ENCODE measurements at regions of chr6 and their contacts with region 1.

Region 1: GRCh38 chr6:33771146-33772081 is 17.5 kb downstream of the LEMD2 start:
- DNase-seq: peak; percentile 27 to 81 (median 65)
- ATAC-seq: peak; percentile 82
- H3K4me3 ChIP-seq: no peak overlapping the region
- H3K4me3 Mint-ChIP-seq: no peak overlapping the region
- H3K27ac ChIP-seq: no peak overlapping the region
- H3K27ac Mint-ChIP-seq: peak overlapping the region; percentile 58
- H3K4me1 ChIP-seq: no peaks in the 10 kb centered on the region
- H3K4me1 Mint-ChIP-seq: peaks cover 9% of the 10 kb centered on the region
- H3K27me3 ChIP-seq: no peaks in the 10 kb centered on the region
- H3K27me3 Mint-ChIP-seq: peaks cover 9% of the 10 kb centered on the region
- CTCF ChIP-seq: peak; percentile 95

Region 2: DNA sequence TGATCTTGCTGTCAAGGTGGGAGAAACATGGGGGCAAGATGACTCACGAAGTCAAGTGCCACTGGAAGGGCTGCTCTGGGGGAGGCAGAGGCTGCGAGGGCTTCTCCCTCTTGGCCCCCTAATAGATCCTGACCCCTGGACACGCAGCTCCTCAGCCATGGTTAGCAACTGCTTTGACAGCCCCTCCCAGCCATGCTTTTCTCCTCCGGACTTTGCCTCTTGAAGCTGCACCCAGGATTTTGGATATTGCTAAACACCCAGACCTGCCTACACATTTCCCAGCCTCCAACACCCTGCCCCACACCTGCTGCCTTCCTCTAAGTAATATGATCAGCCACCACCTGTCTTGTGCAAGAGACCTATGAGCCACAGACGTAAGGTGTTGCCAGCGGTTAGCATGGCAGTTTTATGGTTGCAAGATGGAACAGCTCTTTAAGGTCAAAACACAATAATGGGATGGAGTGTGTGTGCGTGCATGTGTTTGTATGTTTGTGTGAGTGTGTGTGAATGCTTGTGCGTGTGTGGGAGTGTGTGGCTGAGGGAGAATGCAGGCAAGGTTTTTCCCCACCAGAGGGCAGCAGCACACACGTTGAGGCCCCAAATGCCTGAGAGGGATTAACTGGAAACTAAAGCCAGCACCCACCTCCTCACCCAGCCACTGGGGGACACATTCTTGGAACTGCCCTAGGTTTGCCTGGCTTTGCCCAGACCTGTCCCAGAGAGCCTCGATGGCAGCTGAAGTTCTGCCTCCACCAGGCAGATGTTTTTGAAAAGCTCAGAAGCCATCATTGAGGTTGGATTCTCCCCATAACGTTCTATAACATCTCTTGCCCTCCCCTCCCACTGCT is 27.2 kb before region 1 on chr6:
- CTCF ChIA-PET with region 1: interaction called, 67 read pairs
- POLR2A ChIA-PET with region 1: no interaction called
- intact Hi-C with region 1: no loop called
- DNase-seq: peak; percentile 47 to 83 (median 76)
- ATAC-seq: peak; percentile 95
- H3K4me3 ChIP-seq: no peak overlapping the region
- H3K4me3 Mint-ChIP-seq: no peak overlapping the region
- H3K27ac ChIP-seq: no peak overlapping the region
- H3K27ac Mint-ChIP-seq: no peak overlapping the region
- H3K4me1 ChIP-seq: no peaks in the 10 kb centered on the region
- H3K4me1 Mint-ChIP-seq: peaks cover 3% of the 10 kb centered on the region
- H3K27me3 ChIP-seq: no peaks in the 10 kb centered on the region
- H3K27me3 Mint-ChIP-seq: peaks cover 4% of the 10 kb centered on the region
- CTCF ChIP-seq: peak; percentile 67

Region 3: DNA sequence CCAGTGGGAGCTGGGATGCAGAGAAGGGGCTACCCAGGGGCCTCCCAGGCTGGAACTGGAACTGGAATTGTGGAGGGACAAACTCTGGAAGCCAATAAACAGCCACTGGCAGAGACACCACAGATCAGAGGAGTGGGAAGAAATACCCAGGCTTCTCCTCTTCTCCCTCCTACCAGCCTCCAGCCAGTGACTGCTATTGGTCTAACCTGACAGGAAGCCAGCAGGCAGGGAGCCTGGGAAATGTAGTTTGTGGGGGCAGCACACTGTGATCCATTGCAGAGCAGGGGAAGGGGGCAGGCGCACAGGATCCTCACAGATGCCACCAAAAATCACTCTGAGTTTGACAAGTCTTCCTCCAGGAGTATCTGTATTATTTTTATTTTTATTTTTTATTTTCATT is 44.4 kb after region 1 on chr6:
- CTCF ChIA-PET with region 1: interaction called, 11 read pairs
- POLR2A ChIA-PET with region 1: no interaction called
- intact Hi-C with region 1: no loop called
- DNase-seq: peak in 1 of 9 experiments; percentile 16
- ATAC-seq: no peak
- H3K4me3 ChIP-seq: no peak overlapping the region
- H3K4me3 Mint-ChIP-seq: no peak overlapping the region
- H3K27ac ChIP-seq: no peak overlapping the region
- H3K27ac Mint-ChIP-seq: no peak overlapping the region
- H3K4me1 ChIP-seq: peaks cover 2% of the 10 kb centered on the region
- H3K4me1 Mint-ChIP-seq: peaks cover 4% of the 10 kb centered on the region
- H3K27me3 ChIP-seq: peaks cover 12 to 16% of the 10 kb centered on the region in 2 experiments
- H3K27me3 Mint-ChIP-seq: peaks cover 30% of the 10 kb centered on the region
- CTCF ChIP-seq: no peak

Region 4: DNA sequence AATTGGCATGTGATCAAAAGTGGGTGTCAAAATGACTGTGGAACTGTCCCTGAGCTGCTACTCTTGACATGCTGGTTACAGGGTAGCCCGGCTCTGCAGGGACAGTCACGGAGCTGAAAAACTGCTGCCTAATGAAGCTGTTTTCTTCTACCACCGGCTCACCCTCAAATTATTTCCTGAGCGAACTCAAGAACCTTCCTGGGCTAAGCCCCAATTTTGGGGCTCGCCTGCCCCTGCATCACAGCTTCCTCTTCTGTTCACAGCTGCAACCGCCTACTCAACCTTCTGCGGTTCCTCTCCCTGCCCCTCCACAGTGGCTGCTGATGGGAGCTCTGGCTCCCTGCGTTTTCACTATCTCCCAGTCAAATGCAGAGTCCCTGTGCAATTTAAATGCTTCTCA is 143.2 kb after region 1 on chr6:
- CTCF ChIA-PET with region 1: interaction called, 11 read pairs
- POLR2A ChIA-PET with region 1: no interaction called
- intact Hi-C with region 1: no loop called
- DNase-seq: peak; percentile 29 to 82 (median 59)
- ATAC-seq: peak; percentile 87
- H3K4me3 ChIP-seq: peak overlapping the region in 1 of 2 experiments; percentile 4
- H3K4me3 Mint-ChIP-seq: peak overlapping the region; percentile 67
- H3K27ac ChIP-seq: no peak overlapping the region
- H3K27ac Mint-ChIP-seq: peak overlapping the region; percentile 68
- H3K4me1 ChIP-seq: peaks cover 38% of the 10 kb centered on the region
- H3K4me1 Mint-ChIP-seq: peaks cover 49% of the 10 kb centered on the region
- H3K27me3 ChIP-seq: no peaks in the 10 kb centered on the region
- H3K27me3 Mint-ChIP-seq: no peaks in the 10 kb centered on the region
- CTCF ChIP-seq: no peak

Region 5: DNA sequence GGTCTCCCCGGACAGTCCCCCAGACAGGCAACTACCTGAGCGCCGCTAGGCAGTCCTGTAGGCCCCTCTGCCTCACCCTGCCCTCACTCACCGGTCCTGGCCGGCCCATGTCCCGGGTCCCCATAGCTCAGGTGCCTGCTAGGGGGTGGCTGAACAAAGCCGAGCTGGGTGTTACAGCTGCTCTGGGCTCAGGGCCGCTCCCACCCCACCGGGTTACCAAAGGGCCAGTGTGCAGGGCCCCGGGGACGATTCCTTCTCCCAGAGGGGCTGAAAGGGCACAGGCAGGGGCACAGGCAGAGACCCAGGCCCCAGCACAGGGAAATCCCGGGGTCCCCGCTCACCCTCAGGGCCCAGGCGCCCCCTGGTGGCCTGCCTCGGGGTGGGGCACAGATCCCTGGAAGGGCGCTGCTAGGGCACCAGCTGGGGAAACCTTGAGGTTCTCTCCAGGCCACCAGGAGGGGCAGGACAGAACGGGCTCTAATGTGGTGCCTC is 256.1 kb after region 1 on chr6:
- CTCF ChIA-PET with region 1: interaction called, 251 read pairs
- POLR2A ChIA-PET with region 1: interaction called, 9 read pairs
- intact Hi-C with region 1: loop called in 1 of 2 experiments (anchors 1 kb)
- DNase-seq: peak; percentile 29 to 84 (median 64)
- ATAC-seq: peak; percentile 66
- H3K4me3 ChIP-seq: no peak overlapping the region
- H3K4me3 Mint-ChIP-seq: no peak overlapping the region
- H3K27ac ChIP-seq: no peak overlapping the region
- H3K27ac Mint-ChIP-seq: no peak overlapping the region
- H3K4me1 ChIP-seq: no peaks in the 10 kb centered on the region
- H3K4me1 Mint-ChIP-seq: no peaks in the 10 kb centered on the region
- H3K27me3 ChIP-seq: no peaks in the 10 kb centered on the region
- H3K27me3 Mint-ChIP-seq: peaks cover 5% of the 10 kb centered on the region
- CTCF ChIP-seq: peak; percentile 82

Region 6: GRCh38 chr6:34154668-34155447 is 383.4 kb after region 1 on chr6:
- CTCF ChIA-PET with region 1: interaction called, 106 read pairs
- POLR2A ChIA-PET with region 1: no interaction called
- intact Hi-C with region 1: loop called (anchors 1 kb)
- DNase-seq: peak; percentile 46 to 84 (median 68)
- ATAC-seq: peak; percentile 99
- H3K4me3 ChIP-seq: peak overlapping the region in 1 of 2 experiments; percentile 20
- H3K4me3 Mint-ChIP-seq: no peak overlapping the region
- H3K27ac ChIP-seq: no peak overlapping the region
- H3K27ac Mint-ChIP-seq: no peak overlapping the region
- H3K4me1 ChIP-seq: peaks cover 14% of the 10 kb centered on the region
- H3K4me1 Mint-ChIP-seq: peaks cover 6% of the 10 kb centered on the region
- H3K27me3 ChIP-seq: peaks cover 9 to 17% of the 10 kb centered on the region in 2 experiments
- H3K27me3 Mint-ChIP-seq: peaks cover 28% of the 10 kb centered on the region
- CTCF ChIP-seq: peak; percentile 97

Measured in CD8-positive, alpha-beta T cell (primary cell).